Lower leg skin (tissue), 4 donors: ENCODE measurements at regions of chr4 and their contacts with region 1.

Region 1: DNA sequence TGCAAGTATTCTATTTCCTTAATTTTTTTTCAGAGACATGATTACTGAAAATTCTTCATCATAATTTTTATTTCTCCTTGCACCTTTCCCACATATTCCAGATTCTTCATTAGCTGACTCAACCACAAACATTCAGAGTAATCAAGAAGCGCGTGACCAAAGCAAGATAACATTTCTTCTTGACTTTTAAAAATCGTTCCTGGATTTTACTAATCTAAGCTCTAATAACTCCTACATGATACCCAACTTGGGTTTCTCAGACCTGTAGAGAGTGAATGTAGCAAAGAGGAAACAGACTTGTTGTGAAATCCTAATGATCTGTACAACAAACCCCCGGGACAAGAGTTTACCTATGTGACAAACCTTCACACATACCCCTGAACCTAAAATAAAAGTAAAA is 615.0 kb downstream of the TMA16 start:
- DNase-seq: no peak
- H3K4me3 ChIP-seq: no peak overlapping the region
- CTCF ChIP-seq: no peak
- POLR2A ChIP-seq: no peak

Region 2: GRCh38 chr4:164134388-164134787 is 24.9 kb after region 1 on chr4:
- intact Hi-C with region 1: loop called (anchors 2 kb)
- DNase-seq: no peak
- H3K4me3 ChIP-seq: no peak overlapping the region
- CTCF ChIP-seq: no peak
- POLR2A ChIP-seq: no peak